ENCODE measurements at regions of chr19 and their contacts with region 1.

Region 1: GRCh38 chr19:42132851-42133528 is 744 bp upstream of the POU2F2 start:
- DNase-seq: peak; percentile 93
- ATAC-seq: peak; percentile 42
- H3K4me3 ChIP-seq: peak overlapping the region; percentile 92 to 100 (median 98)
- H3K4me3 Mint-ChIP-seq: peak overlapping the region; percentile 92
- H3K27ac ChIP-seq: peak overlapping the region; percentile 51 to 71
- H3K27ac Mint-ChIP-seq: peak overlapping the region; percentile 97
- H3K4me1 ChIP-seq: peaks cover 41 to 70% of the 10 kb centered on the region in 2 donors
- H3K4me1 Mint-ChIP-seq: peaks cover 77% of the 10 kb centered on the region
- H3K27me3 ChIP-seq: no peaks in the 10 kb centered on the region
- H3K27me3 Mint-ChIP-seq: no peaks in the 10 kb centered on the region
- CTCF ChIP-seq: peak; percentile 100

Region 2: DNA sequence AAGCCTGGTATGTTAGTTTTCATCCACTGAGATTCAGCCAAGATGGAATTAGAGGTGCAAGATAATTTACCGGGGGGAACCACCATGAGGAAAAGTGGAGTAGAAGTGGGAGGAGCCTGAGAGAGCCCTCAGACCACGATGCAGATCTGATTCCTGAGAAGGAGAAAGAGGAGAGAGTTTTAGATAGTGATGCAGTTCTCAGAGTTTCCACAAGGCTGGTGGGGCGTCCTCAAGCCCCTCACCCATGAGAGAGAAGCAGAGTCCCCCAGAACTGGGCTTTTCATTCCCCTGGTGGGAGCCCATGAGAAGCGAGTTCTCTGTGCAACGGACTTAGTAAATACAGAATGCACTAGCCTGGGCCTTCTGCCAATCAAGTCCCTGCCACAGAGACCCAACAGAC is 406.5 kb before region 1 on chr19:
- CTCF ChIA-PET with region 1: no interaction called
- POLR2A ChIA-PET with region 1: no interaction called
- intact Hi-C with region 1: no loop called
- DNase-seq: no peak
- ATAC-seq: no peak
- H3K4me3 ChIP-seq: no peak overlapping the region
- H3K4me3 Mint-ChIP-seq: no peak overlapping the region
- H3K27ac ChIP-seq: no peak overlapping the region
- H3K27ac Mint-ChIP-seq: no peak overlapping the region
- H3K4me1 ChIP-seq: no peaks in the 10 kb centered on the region
- H3K4me1 Mint-ChIP-seq: no peaks in the 10 kb centered on the region
- H3K27me3 ChIP-seq: peaks cover 0 to 23% (median 1%) of the 10 kb centered on the region in 4 experiments
- H3K27me3 Mint-ChIP-seq: peaks cover 39% of the 10 kb centered on the region
- CTCF ChIP-seq: no peak

Region 3: GRCh38 chr19:41872775-41873647 is 260.0 kb before region 1 on chr19:
- CTCF ChIA-PET with region 1: no interaction called
- POLR2A ChIA-PET with region 1: interaction called, 3 read pairs
- intact Hi-C with region 1: loop called (anchors 2 kb)
- DNase-seq: peak; percentile 80
- ATAC-seq: no peak
- H3K4me3 ChIP-seq: no peak overlapping the region
- H3K4me3 Mint-ChIP-seq: peak overlapping the region; percentile 52
- H3K27ac ChIP-seq: peak overlapping the region; percentile 79 to 96
- H3K27ac Mint-ChIP-seq: peak overlapping the region; percentile 90
- H3K4me1 ChIP-seq: peaks cover 68 to 90% of the 10 kb centered on the region in 2 donors
- H3K4me1 Mint-ChIP-seq: peaks cover 70% of the 10 kb centered on the region
- H3K27me3 ChIP-seq: no peaks in the 10 kb centered on the region
- H3K27me3 Mint-ChIP-seq: no peaks in the 10 kb centered on the region
- CTCF ChIP-seq: peak; percentile 82

Region 4: GRCh38 chr19:42108527-42109389 is 24.2 kb before region 1 on chr19:
- CTCF ChIA-PET with region 1: interaction called, 419 read pairs
- POLR2A ChIA-PET with region 1: interaction called, 77 read pairs
- intact Hi-C with region 1: loop called (anchors 1 kb)
- DNase-seq: peak; percentile 92
- ATAC-seq: peak; percentile 98
- H3K4me3 ChIP-seq: no peak overlapping the region
- H3K4me3 Mint-ChIP-seq: peak overlapping the region; percentile 24
- H3K27ac ChIP-seq: peak overlapping the region in 1 of 2 donors; percentile 58
- H3K27ac Mint-ChIP-seq: peak overlapping the region; percentile 71
- H3K4me1 ChIP-seq: peaks cover 33 to 53% of the 10 kb centered on the region in 2 donors
- H3K4me1 Mint-ChIP-seq: peaks cover 57% of the 10 kb centered on the region
- H3K27me3 ChIP-seq: no peaks in the 10 kb centered on the region
- H3K27me3 Mint-ChIP-seq: no peaks in the 10 kb centered on the region
- CTCF ChIP-seq: peak; percentile 100

Region 5: DNA sequence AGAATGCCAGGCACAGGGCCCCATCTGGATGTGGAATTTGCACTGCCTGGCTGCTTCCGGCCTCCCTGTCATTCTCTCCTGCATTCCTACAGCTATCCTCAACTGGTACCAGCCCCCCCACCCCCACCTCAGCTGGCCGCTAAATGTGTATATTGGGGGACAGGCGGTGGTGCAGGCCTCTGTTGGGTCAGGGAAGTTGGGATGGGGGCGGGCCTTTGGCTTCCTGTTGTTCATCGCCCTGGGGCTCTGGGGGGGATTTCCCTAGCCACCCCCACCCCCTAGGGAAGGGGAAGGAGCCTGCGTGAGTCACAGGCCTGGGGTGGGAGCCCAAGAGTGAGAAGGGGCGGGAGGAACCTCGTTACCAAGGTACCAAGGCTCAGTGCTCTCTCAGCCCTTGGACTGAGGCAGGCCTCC is 11.3 kb before region 1 on chr19:
- CTCF ChIA-PET with region 1: interaction called, 419 read pairs
- POLR2A ChIA-PET with region 1: interaction called, 77 read pairs
- intact Hi-C with region 1: loop called (anchors 1 kb)
- DNase-seq: peak; percentile 81
- ATAC-seq: peak; percentile 82
- H3K4me3 ChIP-seq: peak overlapping the region in 4 of 5 experiments; percentile 30 to 62 (median 45)
- H3K4me3 Mint-ChIP-seq: peak overlapping the region; percentile 87
- H3K27ac ChIP-seq: peak overlapping the region; percentile 93 to 96
- H3K27ac Mint-ChIP-seq: peak overlapping the region; percentile 96
- H3K4me1 ChIP-seq: peaks cover 87 to 100% of the 10 kb centered on the region in 2 donors
- H3K4me1 Mint-ChIP-seq: peaks cover 90% of the 10 kb centered on the region
- H3K27me3 ChIP-seq: no peaks in the 10 kb centered on the region
- H3K27me3 Mint-ChIP-seq: no peaks in the 10 kb centered on the region
- CTCF ChIP-seq: no peak

Region 6: GRCh38 chr19:42184401-42184861 is 51.4 kb after region 1 on chr19:
- CTCF ChIA-PET with region 1: interaction called, 15 read pairs
- POLR2A ChIA-PET with region 1: no interaction called
- intact Hi-C with region 1: loop called (anchors 1 kb)
- DNase-seq: peak; percentile 78
- ATAC-seq: peak; percentile 64
- H3K4me3 ChIP-seq: no peak overlapping the region
- H3K4me3 Mint-ChIP-seq: no peak overlapping the region
- H3K27ac ChIP-seq: no peak overlapping the region
- H3K27ac Mint-ChIP-seq: peak overlapping the region; percentile 27
- H3K4me1 ChIP-seq: peaks cover 33 to 41% of the 10 kb centered on the region in 2 donors
- H3K4me1 Mint-ChIP-seq: peaks cover 41% of the 10 kb centered on the region
- H3K27me3 ChIP-seq: peaks cover 0 to 13% (median 12%) of the 10 kb centered on the region in 4 experiments
- H3K27me3 Mint-ChIP-seq: peaks cover 8% of the 10 kb centered on the region
- CTCF ChIP-seq: peak; percentile 91

Region 7: GRCh38 chr19:42219812-42220750 is 87.1 kb after region 1 on chr19 and contains the start of gene ZNF526:
- CTCF ChIA-PET with region 1: interaction called, 6 read pairs
- POLR2A ChIA-PET with region 1: interaction called, 11 read pairs
- intact Hi-C with region 1: loop called (anchors 1 kb)
- DNase-seq: peak; percentile 97
- ATAC-seq: peak; percentile 82
- H3K4me3 ChIP-seq: peak within 1 kb of the TSS; percentile 72 to 96 (median 85)
- H3K4me3 Mint-ChIP-seq: peak within 1 kb of the TSS; percentile 96
- H3K27ac ChIP-seq: peak within 1 kb of the TSS; percentile 66 to 88
- H3K27ac Mint-ChIP-seq: peak within 1 kb of the TSS; percentile 92
- H3K4me1 ChIP-seq: peaks cover 41 to 51% of the 10 kb centered on the region in 2 donors
- H3K4me1 Mint-ChIP-seq: peaks cover 59% of the 10 kb centered on the region
- H3K27me3 ChIP-seq: no peaks in the 10 kb centered on the region
- H3K27me3 Mint-ChIP-seq: no peaks in the 10 kb centered on the region
- CTCF ChIP-seq: no peak
- total RNA-seq, gene ZNF526: 19.0 and 21.3 TPM in 2 replicates

Region 8: DNA sequence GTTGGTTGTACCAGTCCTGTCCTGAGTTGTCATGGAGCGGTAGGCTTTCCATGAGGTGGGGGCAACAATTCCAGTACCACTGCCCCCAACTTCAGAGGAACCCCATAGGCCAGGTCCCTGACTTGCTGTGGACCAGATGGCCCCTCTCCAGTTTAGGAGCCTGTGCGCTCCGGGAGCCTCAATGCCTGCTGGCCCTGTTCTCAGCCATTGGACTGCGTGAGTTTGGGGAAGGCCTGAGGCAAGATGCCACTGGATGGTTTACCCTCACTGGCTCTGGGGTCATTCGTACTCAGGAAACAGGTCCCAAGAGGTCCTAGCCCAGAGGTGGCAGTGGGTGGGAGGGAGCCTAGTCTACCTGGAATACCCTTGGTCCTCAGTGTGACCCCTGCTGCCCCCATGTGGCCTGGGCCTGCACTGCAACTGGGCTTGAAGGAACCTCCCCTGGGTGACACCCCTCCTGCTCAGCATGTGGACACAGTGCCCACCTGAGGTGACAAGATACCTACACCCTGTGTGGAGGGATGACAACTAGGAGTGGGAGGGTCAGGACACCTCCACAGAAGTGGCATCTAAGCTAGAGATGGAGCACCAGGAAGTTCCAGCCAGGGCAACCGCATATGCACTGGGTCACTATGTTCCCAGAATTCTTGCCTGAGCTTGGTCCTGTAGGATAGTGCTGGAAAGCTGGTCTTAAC is 163.0 kb after region 1 on chr19:
- CTCF ChIA-PET with region 1: interaction called, 12 read pairs
- POLR2A ChIA-PET with region 1: interaction called, 8 read pairs
- intact Hi-C with region 1: loop called (anchors 1 kb)
- DNase-seq: peak; percentile 89
- ATAC-seq: peak; percentile 98
- H3K4me3 ChIP-seq: no peak overlapping the region
- H3K4me3 Mint-ChIP-seq: no peak overlapping the region
- H3K27ac ChIP-seq: no peak overlapping the region
- H3K27ac Mint-ChIP-seq: peak overlapping the region; percentile 71
- H3K4me1 ChIP-seq: peaks cover 3 to 10% of the 10 kb centered on the region in 2 donors
- H3K4me1 Mint-ChIP-seq: peaks cover 11% of the 10 kb centered on the region
- H3K27me3 ChIP-seq: no peaks in the 10 kb centered on the region
- H3K27me3 Mint-ChIP-seq: no peaks in the 10 kb centered on the region
- CTCF ChIP-seq: peak; percentile 91